Activated CD4-positive, alpha-beta memory T cell treated with anti-CD3 and anti-CD28 coated beads for 36 hours (primary cell): ENCODE measurements at regions of chr6 and their contacts with region 1.

Region 1: GRCh38 chr6:125918681-125919566 is 37.6 kb upstream of the HINT3 start:
- DNase-seq: peak; percentile 65
- H3K4me3 Mint-ChIP-seq: peak overlapping the region; percentile 87
- H3K27ac Mint-ChIP-seq: peak overlapping the region; percentile 96
- H3K4me1 Mint-ChIP-seq: peaks cover 47% of the 10 kb centered on the region
- H3K27me3 Mint-ChIP-seq: no peaks in the 10 kb centered on the region

Region 2: DNA sequence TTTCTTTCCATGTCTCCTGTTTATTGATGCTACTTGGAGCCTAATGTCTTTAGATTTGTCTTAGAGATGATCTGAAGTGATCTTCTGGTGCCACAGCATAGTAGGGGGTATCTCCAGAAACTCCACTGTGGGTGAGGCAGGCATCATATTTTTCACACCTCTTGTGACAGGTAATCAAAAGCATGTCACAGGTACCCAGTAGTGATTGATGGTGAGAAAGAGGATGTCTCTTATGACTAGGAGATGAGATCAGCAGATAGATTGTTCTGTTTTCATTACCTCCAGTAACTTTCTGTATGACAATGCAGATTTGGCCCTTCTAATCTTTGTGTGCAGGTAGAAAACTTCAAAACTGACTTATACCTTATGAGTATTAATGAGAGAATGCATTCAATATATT is 114.7 kb before region 1 on chr6:
- CTCF ChIA-PET with region 1: no interaction called
- POLR2A ChIA-PET with region 1: no interaction called
- intact Hi-C with region 1: loop called (anchors 1 kb)
- DNase-seq: peak; percentile 58
- H3K4me3 Mint-ChIP-seq: no peak overlapping the region
- H3K27ac Mint-ChIP-seq: peak overlapping the region; percentile 9
- H3K4me1 Mint-ChIP-seq: peaks cover 66% of the 10 kb centered on the region
- H3K27me3 Mint-ChIP-seq: peaks cover 2% of the 10 kb centered on the region

Region 3: DNA sequence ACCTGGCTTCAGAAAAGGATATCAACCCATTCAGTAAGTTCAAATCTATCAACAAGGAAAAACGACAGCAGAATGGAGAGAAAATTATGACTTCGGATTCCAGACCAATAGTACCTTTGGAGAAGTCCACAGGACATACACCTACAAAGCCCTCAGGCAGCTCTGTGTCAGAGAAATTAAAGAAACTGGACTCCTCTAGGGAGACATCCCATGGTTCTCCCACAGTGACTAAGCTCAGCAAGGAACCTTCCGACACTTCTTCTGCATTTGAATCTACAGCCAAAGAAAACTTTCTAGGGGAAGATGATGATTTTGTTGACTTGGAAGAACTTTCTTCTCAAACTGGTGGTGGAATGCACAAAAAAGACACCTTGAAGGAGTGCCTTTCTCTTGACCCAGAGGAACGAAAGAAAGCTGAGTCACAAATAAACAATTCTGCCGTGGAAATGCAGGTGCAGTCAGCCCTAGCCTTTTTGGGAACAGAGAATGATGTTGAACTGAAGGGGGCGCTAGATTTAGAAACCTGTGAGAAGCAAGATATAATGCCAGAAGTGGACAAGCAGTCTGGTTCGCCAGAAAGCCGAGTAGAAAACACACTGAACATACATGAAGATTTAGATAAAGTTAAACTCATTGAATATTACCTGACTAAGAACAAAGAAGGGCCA is 29.8 kb before region 1 on chr6:
- CTCF ChIA-PET with region 1: interaction called, 3 read pairs
- POLR2A ChIA-PET with region 1: no interaction called
- intact Hi-C with region 1: loop called (anchors 2 kb)
- DNase-seq: peak; percentile 26
- H3K4me3 Mint-ChIP-seq: no peak overlapping the region
- H3K27ac Mint-ChIP-seq: no peak overlapping the region
- H3K4me1 Mint-ChIP-seq: no peaks in the 10 kb centered on the region
- H3K27me3 Mint-ChIP-seq: no peaks in the 10 kb centered on the region

Region 4: GRCh38 chr6:125906158-125906998 is 12.5 kb before region 1 on chr6:
- CTCF ChIA-PET with region 1: interaction called, 69 read pairs
- POLR2A ChIA-PET with region 1: interaction called, 16 read pairs
- intact Hi-C with region 1: loop called (anchors 1 kb)
- DNase-seq: peak; percentile 63
- H3K4me3 Mint-ChIP-seq: no peak overlapping the region
- H3K27ac Mint-ChIP-seq: peak overlapping the region; percentile 26
- H3K4me1 Mint-ChIP-seq: peaks cover 47% of the 10 kb centered on the region
- H3K27me3 Mint-ChIP-seq: no peaks in the 10 kb centered on the region

Region 5: GRCh38 chr6:125939791-125940190 is 20.9 kb after region 1 on chr6:
- CTCF ChIA-PET with region 1: no interaction called
- POLR2A ChIA-PET with region 1: interaction called, 3 read pairs
- intact Hi-C with region 1: loop called (anchors 1 kb)
- DNase-seq: no peak
- H3K4me3 Mint-ChIP-seq: no peak overlapping the region
- H3K27ac Mint-ChIP-seq: no peak overlapping the region
- H3K4me1 Mint-ChIP-seq: peaks cover 21% of the 10 kb centered on the region
- H3K27me3 Mint-ChIP-seq: peaks cover 3% of the 10 kb centered on the region